ENCODE measurements at regions of chr15 and their contacts with region 1.

Region 1: GRCh38 chr15:101267320-101268104 is 9.8 kb downstream of the SELENOS start:
- DNase-seq: peak; percentile 31
- H3K4me3 ChIP-seq: no peak overlapping the region
- CTCF ChIP-seq: no peak

Region 2: DNA sequence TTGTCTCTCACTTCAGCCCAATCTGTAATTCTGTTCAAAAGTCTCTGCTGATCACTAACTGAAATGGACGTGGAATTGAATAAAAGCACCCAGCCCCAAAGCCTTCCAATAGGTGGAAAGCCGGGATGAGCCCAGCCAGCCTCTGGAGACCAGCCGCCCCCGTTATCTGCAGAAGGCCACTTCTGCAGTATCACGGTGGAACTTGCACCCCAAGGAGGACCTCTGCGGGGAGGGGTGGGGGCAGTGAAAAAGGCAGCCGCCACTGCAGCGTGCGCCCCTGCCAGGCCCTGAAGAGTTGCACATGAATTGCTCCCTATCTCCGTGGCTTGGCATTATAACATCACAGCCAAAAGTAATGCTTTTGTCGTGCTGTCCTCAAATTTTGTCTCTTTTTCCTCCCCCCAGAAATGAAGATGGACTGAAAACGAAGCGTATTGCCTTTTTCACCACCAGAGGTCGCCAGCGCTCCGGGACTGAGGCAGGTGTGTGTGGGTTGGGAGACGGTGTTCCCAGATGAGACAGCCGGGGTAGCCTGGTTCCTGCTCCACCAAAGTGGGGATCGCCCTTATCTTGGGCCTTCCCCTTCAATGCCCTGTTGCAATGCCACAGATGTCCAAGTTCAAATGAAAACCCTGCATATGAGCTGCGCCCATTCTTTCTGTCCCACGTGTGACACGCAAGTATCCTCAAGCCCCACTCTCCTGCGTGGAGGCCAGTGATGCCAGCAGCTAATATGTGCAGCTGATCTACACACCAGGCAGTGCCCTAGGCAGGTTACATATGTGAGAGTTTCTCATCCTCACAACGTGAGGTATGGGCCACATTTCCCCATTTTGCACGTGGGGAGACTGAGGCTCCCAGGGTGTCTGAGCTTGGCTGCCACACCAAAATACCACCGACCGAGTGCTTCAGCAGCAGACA is 252.3 kb before region 1 on chr15:
- CTCF ChIA-PET with region 1: interaction called, 43 read pairs
- POLR2A ChIA-PET with region 1: no interaction called
- DNase-seq: no peak
- H3K4me3 ChIP-seq: no peak overlapping the region
- CTCF ChIP-seq: peak; percentile 83

Region 3: DNA sequence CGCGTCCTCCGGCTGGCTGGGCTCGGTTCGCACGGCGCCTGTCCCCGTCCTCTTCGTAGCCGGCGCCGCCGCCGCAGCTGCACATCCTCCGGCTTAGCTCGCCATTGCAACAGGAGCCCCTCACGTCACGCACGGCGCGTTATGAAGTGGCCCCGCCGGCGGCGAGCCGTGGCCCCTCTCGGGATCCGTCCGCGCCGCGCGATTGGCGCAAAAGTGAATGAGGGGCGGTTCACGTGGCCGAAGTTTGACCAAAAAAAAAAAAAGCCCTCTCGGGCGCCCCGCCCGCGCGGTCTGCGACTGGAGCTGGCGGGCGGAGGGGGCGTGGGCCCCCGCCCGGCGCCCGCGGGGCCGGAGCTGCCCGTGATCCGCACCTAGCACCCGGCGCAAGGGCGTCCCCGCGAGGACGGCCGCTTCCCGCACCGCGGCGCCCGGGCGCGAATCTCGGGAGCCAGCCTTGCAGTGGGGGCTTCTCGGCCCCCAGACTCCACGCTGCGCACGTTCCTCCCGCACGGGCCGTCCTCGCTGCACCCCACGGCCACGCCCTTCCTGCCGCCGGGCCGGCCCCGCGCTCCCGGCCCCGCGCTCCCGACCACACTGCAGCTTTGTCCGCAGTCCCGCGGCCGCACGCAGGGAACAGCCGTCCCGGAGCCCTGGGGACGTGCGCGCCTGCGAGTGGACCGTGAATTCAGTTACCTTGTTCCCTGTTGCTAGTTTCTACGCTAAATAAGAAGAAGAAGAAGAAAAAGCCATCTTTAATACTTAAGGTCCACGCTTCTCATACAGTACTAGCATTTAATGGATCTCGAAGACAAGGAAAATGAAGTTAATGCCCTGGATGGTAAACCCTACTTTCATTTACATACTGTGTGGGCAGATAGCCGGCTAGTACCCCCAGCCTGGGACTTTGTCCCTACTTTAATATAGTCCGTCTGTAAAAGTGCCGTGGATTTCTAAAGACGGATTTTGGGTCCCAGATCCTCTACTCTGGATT is 15.4 kb before region 1 on chr15 and contains the start of gene CHSY1:
- CTCF ChIA-PET with region 1: interaction called, 21 read pairs
- POLR2A ChIA-PET with region 1: interaction called, 10 read pairs
- DNase-seq: peak; percentile 46
- H3K4me3 ChIP-seq: peak within 1 kb of the TSS; percentile 72
- CTCF ChIP-seq: peak; percentile 18